Aorta (tissue), 5 donors: ENCODE measurements at regions of chr1 and their contacts with region 1.

Region 1: GRCh38 chr1:39609618-39610331 is 29.7 kb downstream of the HEYL start:
- DNase-seq: peak; percentile 66 to 92
- ATAC-seq: peak; percentile 89
- H3K4me3 ChIP-seq: no peak overlapping the region
- H3K27ac ChIP-seq: no peak overlapping the region
- H3K4me1 ChIP-seq: no peaks in the 10 kb centered on the region
- H3K27me3 ChIP-seq: no peaks in the 10 kb centered on the region

Region 2: GRCh38 chr1:39720094-39720999 is 110.6 kb after region 1 on chr1:
- intact Hi-C with region 1: loop called (anchors 5 kb)
- DNase-seq: no peak
- ATAC-seq: peak; percentile 82
- H3K4me3 ChIP-seq: no peak overlapping the region
- H3K27ac ChIP-seq: no peak overlapping the region
- H3K4me1 ChIP-seq: no peaks in the 10 kb centered on the region
- H3K27me3 ChIP-seq: no peaks in the 10 kb centered on the region